Pancreas (tissue), 10 donors: ENCODE measurements at regions of chr21 and their contacts with region 1.

Region 1: DNA sequence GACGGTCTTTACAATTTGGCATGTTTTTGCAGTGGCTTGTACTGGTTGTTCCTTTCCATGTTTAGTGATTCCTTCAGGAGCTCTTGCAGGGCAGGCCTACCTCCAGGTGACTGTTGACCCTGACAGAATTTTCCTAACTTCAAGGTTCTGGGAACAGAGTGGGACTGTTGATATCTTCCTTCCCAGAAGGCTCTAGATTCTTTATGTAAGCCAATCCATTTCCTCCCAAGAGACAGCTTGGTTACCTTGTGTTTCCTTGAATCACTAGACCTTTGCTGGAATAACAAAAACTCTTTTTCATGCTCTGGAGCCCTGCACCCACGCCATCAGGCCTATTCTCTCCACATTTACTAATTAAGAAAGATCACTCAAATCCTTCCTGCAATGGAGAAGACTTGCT is 67.0 kb downstream of the C21orf91 start:
- DNase-seq: no peak
- ATAC-seq: no peak
- H3K4me3 ChIP-seq: no peak overlapping the region
- H3K27ac ChIP-seq: no peak overlapping the region
- H3K4me1 ChIP-seq: no peaks in the 10 kb centered on the region
- H3K27me3 ChIP-seq: no peaks in the 10 kb centered on the region
- CTCF ChIP-seq: no peak

Region 2: DNA sequence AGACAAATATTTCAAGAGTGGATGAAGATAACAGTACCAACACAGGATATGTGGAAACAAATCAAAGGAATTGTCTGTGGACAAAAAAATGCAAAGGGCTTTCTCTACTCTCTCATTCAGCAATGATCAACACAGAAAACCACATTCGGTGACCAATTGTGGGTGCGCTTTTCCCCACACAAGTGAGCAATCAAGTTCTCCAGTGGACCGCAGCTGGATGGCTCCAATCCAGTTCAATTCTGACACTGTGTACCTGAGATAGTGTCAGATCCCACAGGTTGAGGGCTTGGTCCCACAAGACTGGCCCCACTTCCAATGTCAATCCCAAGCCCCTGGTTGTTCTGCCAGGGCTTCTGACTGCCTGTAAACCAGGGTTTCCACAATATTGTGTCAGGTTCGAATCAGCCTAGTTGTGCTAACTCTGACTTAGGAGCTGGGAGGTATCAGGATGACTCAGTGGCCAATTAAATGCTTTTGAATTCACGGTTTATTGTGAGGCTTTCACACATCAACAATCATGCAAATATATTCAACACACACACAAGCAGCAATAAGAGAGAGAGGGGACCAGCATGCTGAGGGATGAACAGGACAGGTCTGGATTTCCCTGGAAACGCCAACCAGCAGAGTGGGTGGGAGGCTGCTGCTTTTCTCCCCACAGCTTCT is 52.5 kb before region 1 on chr21:
- intact Hi-C with region 1: loop called in 1 of 3 experiments (anchors 5 kb)
- DNase-seq: no peak
- ATAC-seq: no peak
- H3K4me3 ChIP-seq: no peak overlapping the region
- H3K27ac ChIP-seq: no peak overlapping the region
- H3K4me1 ChIP-seq: no peaks in the 10 kb centered on the region
- H3K27me3 ChIP-seq: no peaks in the 10 kb centered on the region
- CTCF ChIP-seq: no peak